Naive thymus-derived CD4-positive, alpha-beta T cell (primary cell): ENCODE measurements at regions of chr2 and their contacts with region 1.

Region 1: GRCh38 chr2:221716426-221717303 is 144.6 kb upstream of the EPHA4 start:
- DNase-seq: no peak
- ATAC-seq: no peak
- H3K4me3 ChIP-seq: no peak overlapping the region
- H3K4me3 Mint-ChIP-seq: no peak overlapping the region
- H3K27ac ChIP-seq: no peak overlapping the region
- H3K27ac Mint-ChIP-seq: no peak overlapping the region
- H3K4me1 ChIP-seq: no peaks in the 10 kb centered on the region
- H3K4me1 Mint-ChIP-seq: no peaks in the 10 kb centered on the region
- H3K27me3 ChIP-seq: no peaks in the 10 kb centered on the region
- H3K27me3 Mint-ChIP-seq: no peaks in the 10 kb centered on the region

Region 2: GRCh38 chr2:221775096-221775495 is 58.4 kb after region 1 on chr2:
- CTCF ChIA-PET with region 1: no interaction called
- POLR2A ChIA-PET with region 1: no interaction called
- intact Hi-C with region 1: loop called in 1 of 2 experiments (anchors 2 kb)
- DNase-seq: no peak
- ATAC-seq: no peak
- H3K4me3 ChIP-seq: no peak overlapping the region
- H3K4me3 Mint-ChIP-seq: no peak overlapping the region
- H3K27ac ChIP-seq: no peak overlapping the region
- H3K27ac Mint-ChIP-seq: no peak overlapping the region
- H3K4me1 ChIP-seq: no peaks in the 10 kb centered on the region
- H3K4me1 Mint-ChIP-seq: peaks cover 0 to 7% (median 0%) of the 10 kb centered on the region in 7 donors
- H3K27me3 ChIP-seq: no peaks in the 10 kb centered on the region
- H3K27me3 Mint-ChIP-seq: peaks cover 0 to 4% (median 0%) of the 10 kb centered on the region in 5 donors